ENCODE measurements at regions of chr10 and their contacts with region 1.

Region 1: GRCh38 chr10:21495752-21496342 is 29.6 kb downstream of the SKIDA1 start:
- DNase-seq: peak; percentile 73 to 92 (median 86)
- H3K4me3 ChIP-seq: peak overlapping the region; percentile 17 to 66
- H3K4me3 Mint-ChIP-seq: peak overlapping the region; percentile 82 to 93 (median 90)
- H3K27ac ChIP-seq: no peak overlapping the region
- H3K27ac Mint-ChIP-seq: peak overlapping the region in 1 of 7 donors; percentile 67
- H3K4me1 ChIP-seq: peaks cover 34% of the 10 kb centered on the region
- H3K4me1 Mint-ChIP-seq: peaks cover 12 to 36% (median 17%) of the 10 kb centered on the region in 4 donors
- H3K27me3 ChIP-seq: peaks cover 60% of the 10 kb centered on the region
- H3K27me3 Mint-ChIP-seq: peaks cover 42 to 51% of the 10 kb centered on the region in 2 donors

Region 2: GRCh38 chr10:20948686-20949327 is 547.0 kb before region 1 on chr10:
- CTCF ChIA-PET with region 1: no interaction called
- POLR2A ChIA-PET with region 1: no interaction called
- intact Hi-C with region 1: no loop called
- DNase-seq: no peak
- H3K4me3 ChIP-seq: no peak overlapping the region
- H3K4me3 Mint-ChIP-seq: no peak overlapping the region
- H3K27ac ChIP-seq: no peak overlapping the region
- H3K27ac Mint-ChIP-seq: no peak overlapping the region
- H3K4me1 ChIP-seq: no peaks in the 10 kb centered on the region
- H3K4me1 Mint-ChIP-seq: peaks cover 0 to 1% (median 0%) of the 10 kb centered on the region in 4 donors
- H3K27me3 ChIP-seq: no peaks in the 10 kb centered on the region
- H3K27me3 Mint-ChIP-seq: peaks cover 0 to 2% of the 10 kb centered on the region in 2 donors

Region 3: DNA sequence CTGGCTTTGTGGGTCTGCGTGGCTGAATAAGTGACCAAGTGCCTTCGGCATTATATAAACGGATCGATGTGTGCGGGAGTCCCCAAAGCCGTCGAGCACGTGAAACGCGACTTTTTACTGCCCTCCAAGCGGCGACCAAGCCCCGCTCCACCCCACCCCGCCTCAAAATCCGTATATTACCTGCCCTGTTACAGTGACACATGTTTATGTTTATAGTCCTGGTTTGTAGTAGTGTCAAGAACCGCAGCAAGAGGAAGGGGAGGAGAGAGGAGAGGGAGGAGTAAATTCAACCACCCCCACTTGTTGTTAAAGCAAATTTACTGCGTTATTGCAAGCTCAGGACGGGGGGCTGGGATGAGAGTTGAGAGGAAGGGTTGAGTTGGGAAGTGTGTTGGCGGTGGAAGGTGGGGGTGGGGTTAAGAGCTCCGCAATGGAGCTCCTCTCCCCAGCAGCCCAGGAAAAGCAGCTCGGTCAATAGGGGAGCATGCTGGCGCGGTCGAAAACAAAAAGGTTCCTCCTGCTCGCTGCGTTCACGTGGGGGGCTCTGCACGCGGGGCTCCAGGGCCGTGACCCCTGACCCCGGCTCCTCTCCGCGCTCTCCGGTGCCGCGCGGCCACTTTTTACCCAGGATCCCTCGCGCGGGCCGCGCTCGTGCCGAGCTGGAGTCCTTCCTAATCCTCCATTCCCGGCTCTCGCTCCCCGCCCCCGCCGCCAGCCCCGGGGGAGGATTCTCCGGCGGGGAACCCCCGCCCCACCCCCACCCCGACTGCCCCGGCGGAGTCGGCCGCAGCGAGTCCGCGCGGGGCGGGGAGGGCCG is 29.7 kb after region 1 on chr10 and contains the start of gene SKIDA1:
- CTCF ChIA-PET with region 1: interaction called, 6 read pairs
- POLR2A ChIA-PET with region 1: interaction called, 57 read pairs
- intact Hi-C with region 1: no loop called
- DNase-seq: peak; percentile 69 to 81 (median 75)
- H3K4me3 ChIP-seq: peak within 1 kb of the TSS; percentile 55 to 78
- H3K4me3 Mint-ChIP-seq: peak within 1 kb of the TSS; percentile 93 to 99 (median 96)
- H3K27ac ChIP-seq: peak within 1 kb of the TSS; percentile 63
- H3K27ac Mint-ChIP-seq: peak within 1 kb of the TSS; percentile 84 to 98 (median 98)
- H3K4me1 ChIP-seq: peaks cover 23% of the 10 kb centered on the region
- H3K4me1 Mint-ChIP-seq: peaks cover 9 to 36% (median 21%) of the 10 kb centered on the region in 4 donors
- H3K27me3 ChIP-seq: peaks cover 7% of the 10 kb centered on the region
- H3K27me3 Mint-ChIP-seq: peaks cover 9 to 12% of the 10 kb centered on the region in 2 donors
- total RNA-seq, gene SKIDA1: 0.39 to 0.73 TPM

Region 4: DNA sequence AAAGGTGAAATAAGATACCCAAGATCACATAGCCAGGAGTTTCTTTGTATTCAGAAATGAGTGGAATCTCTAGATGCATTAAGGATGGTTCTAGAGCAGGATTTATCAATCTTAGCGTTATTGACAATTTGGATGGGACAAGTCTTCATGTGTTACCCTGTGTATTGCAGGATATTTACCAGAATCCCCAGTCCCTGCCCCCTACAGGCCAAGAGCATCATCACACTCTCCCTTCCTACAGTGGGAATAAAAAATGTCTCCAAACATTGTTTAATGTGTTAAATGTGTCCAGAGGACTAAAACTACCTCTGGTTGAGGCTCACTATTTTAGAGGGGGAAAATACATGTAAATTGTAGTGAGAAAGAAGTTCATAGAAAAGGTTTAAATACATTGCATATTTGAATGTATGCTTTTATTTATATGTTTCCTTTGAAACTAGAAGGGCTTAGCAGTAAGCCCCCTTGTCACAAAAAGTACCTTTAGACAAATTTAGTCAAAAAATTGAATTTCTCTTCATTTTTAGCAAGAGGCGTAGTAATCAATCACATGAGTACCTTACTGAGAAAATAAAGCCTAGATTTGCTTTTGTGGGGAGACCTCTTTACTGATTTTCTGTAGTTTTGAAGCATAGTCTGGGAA is 179.4 kb after region 1 on chr10:
- CTCF ChIA-PET with region 1: interaction called, 5 read pairs
- POLR2A ChIA-PET with region 1: interaction called, 3 read pairs
- intact Hi-C with region 1: loop called (anchors 1 kb)
- DNase-seq: peak in 4 of 5 donors; percentile 11 to 30 (median 14)
- H3K4me3 ChIP-seq: no peak overlapping the region
- H3K4me3 Mint-ChIP-seq: no peak overlapping the region
- H3K27ac ChIP-seq: no peak overlapping the region
- H3K27ac Mint-ChIP-seq: peak overlapping the region in 1 of 7 donors; percentile 58
- H3K4me1 ChIP-seq: no peaks in the 10 kb centered on the region
- H3K4me1 Mint-ChIP-seq: peaks cover under 1 to 8% (median 6%) of the 10 kb centered on the region in 4 donors
- H3K27me3 ChIP-seq: no peaks in the 10 kb centered on the region
- H3K27me3 Mint-ChIP-seq: no peaks in the 10 kb centered on the region

Region 5: GRCh38 chr10:21732067-21732772 is 236.4 kb after region 1 on chr10:
- CTCF ChIA-PET with region 1: interaction called, 32 read pairs
- POLR2A ChIA-PET with region 1: no interaction called
- intact Hi-C with region 1: loop called (anchors 1 kb)
- DNase-seq: peak in 4 of 5 donors; percentile 11 to 29 (median 21)
- H3K4me3 ChIP-seq: no peak overlapping the region
- H3K4me3 Mint-ChIP-seq: no peak overlapping the region
- H3K27ac ChIP-seq: no peak overlapping the region
- H3K27ac Mint-ChIP-seq: peak overlapping the region in 1 of 7 donors; percentile 64
- H3K4me1 ChIP-seq: peaks cover 24% of the 10 kb centered on the region
- H3K4me1 Mint-ChIP-seq: peaks cover 26 to 38% (median 30%) of the 10 kb centered on the region in 4 donors
- H3K27me3 ChIP-seq: no peaks in the 10 kb centered on the region
- H3K27me3 Mint-ChIP-seq: no peaks in the 10 kb centered on the region

Region 6: DNA sequence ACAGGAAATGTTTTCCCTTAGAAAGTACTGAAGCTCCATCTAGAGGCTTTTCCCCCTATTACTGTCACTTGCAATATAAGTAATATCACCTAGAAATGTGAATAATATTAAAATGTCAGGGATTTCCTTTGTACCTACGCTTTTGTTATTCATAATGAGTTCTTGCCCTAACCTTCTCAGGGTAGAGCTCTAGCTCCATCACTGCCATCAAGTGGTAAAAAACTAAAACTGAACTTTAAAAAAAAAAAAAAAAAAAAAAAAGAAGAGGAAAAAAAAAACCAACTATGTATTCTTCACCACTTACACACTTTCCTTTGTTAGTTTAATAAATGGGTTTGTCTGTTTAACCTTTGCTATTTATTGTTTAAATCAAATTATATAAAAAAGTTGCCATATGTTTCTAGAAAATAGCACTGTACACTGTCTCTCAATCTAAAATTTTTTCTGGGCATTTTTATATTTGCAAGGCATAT is 457.8 kb after region 1 on chr10:
- CTCF ChIA-PET with region 1: interaction called, 44 read pairs
- POLR2A ChIA-PET with region 1: interaction called, 3 read pairs
- intact Hi-C with region 1: loop called (anchors 1 kb)
- DNase-seq: peak in 4 of 5 donors; percentile 20 to 32 (median 21)
- H3K4me3 ChIP-seq: no peak overlapping the region
- H3K4me3 Mint-ChIP-seq: no peak overlapping the region
- H3K27ac ChIP-seq: no peak overlapping the region
- H3K27ac Mint-ChIP-seq: no peak overlapping the region
- H3K4me1 ChIP-seq: no peaks in the 10 kb centered on the region
- H3K4me1 Mint-ChIP-seq: peaks cover 0 to 2% (median 0%) of the 10 kb centered on the region in 4 donors
- H3K27me3 ChIP-seq: no peaks in the 10 kb centered on the region
- H3K27me3 Mint-ChIP-seq: no peaks in the 10 kb centered on the region

Region 7: GRCh38 chr10:22251751-22252223 is 755.9 kb after region 1 on chr10:
- CTCF ChIA-PET with region 1: no interaction called
- POLR2A ChIA-PET with region 1: no interaction called
- intact Hi-C with region 1: loop called (anchors 5 kb)
- DNase-seq: peak; percentile 76 to 80 (median 78)
- H3K4me3 ChIP-seq: peak overlapping the region; percentile 70 to 97
- H3K4me3 Mint-ChIP-seq: peak overlapping the region; percentile 89 to 99 (median 96)
- H3K27ac ChIP-seq: peak overlapping the region; percentile 78
- H3K27ac Mint-ChIP-seq: peak overlapping the region; percentile 96 to 100 (median 98)
- H3K4me1 ChIP-seq: peaks cover 43% of the 10 kb centered on the region
- H3K4me1 Mint-ChIP-seq: peaks cover 12 to 58% (median 35%) of the 10 kb centered on the region in 4 donors
- H3K27me3 ChIP-seq: no peaks in the 10 kb centered on the region
- H3K27me3 Mint-ChIP-seq: peaks cover 0 to 2% of the 10 kb centered on the region in 2 donors

Region 8: GRCh38 chr10:23095404-23095965 is 1599.6 kb after region 1 on chr10 and contains the start of gene MSRB2:
- CTCF ChIA-PET with region 1: no interaction called
- POLR2A ChIA-PET with region 1: no interaction called
- intact Hi-C with region 1: loop called (anchors 10 kb)
- DNase-seq: peak; percentile 51 to 76 (median 63)
- H3K4me3 ChIP-seq: peak within 1 kb of the TSS; percentile 18 to 56
- H3K4me3 Mint-ChIP-seq: peak within 1 kb of the TSS; percentile 87 to 96 (median 91)
- H3K27ac ChIP-seq: peak within 1 kb of the TSS; percentile 44
- H3K27ac Mint-ChIP-seq: peak within 1 kb of the TSS; percentile 84 to 94 (median 93)
- H3K4me1 ChIP-seq: peaks cover 15% of the 10 kb centered on the region
- H3K4me1 Mint-ChIP-seq: peaks cover 23 to 46% (median 36%) of the 10 kb centered on the region in 4 donors
- H3K27me3 ChIP-seq: no peaks in the 10 kb centered on the region
- H3K27me3 Mint-ChIP-seq: no peaks in the 10 kb centered on the region
- total RNA-seq, gene MSRB2: 5.3 to 7.1 TPM

Measured in CD4-positive, alpha-beta memory T cell (primary cell).